ENCODE measurements at regions of chr2 and their contacts with region 1.

Region 1: GRCh38 chr2:231706731-231707624 is 1.3 kb upstream of the PTMA start:
- DNase-seq: peak; percentile 85

Region 2: DNA sequence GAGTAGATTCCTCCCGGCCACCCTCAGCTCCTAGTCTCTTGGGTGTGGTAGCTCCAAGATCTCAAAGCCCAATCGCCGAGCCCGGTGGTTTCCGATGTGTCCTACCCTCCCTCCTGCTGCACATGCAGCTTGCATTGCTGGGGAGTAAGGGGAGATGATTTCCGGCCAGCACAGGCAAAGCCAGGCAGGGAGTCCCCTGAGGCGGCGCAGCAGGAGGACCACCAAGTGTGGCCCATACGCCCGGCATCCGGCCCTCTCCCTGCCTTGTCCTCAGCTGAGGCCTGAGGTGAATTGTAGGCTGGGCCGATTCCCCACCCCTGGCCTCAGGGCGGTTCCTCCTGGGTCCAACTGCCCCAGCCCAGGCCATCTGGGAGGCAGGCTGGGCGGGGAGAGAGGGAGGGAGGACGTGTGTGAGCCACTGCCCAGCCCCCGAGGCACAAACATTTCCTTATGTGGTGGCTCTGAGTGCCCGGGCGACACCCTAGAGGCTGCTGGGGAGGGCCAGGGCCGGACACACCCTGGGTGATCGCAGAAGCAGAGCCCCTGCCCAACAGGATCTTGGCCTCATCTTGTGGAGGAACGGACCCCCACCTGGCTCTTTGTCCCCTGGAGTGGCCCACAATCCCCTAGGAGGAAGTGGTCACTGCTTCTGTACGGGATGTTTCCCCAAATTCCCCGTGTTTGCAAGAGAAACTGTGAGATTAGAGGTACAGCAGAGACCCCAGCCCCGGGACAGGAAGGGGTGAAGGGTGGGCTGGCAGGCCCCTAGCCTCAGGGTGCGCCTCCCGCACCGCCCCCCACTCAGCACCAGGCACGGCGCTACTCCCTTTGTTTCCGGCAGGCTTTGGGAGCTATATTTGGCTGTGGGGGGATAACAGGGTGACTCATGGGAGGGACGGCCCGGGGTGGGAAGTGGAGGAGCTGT is 40.5 kb before region 1 on chr2:
- CTCF ChIA-PET with region 1: interaction called, 3 read pairs
- POLR2A ChIA-PET with region 1: interaction called, 19 read pairs
- DNase-seq: peak; percentile 35

Region 3: DNA sequence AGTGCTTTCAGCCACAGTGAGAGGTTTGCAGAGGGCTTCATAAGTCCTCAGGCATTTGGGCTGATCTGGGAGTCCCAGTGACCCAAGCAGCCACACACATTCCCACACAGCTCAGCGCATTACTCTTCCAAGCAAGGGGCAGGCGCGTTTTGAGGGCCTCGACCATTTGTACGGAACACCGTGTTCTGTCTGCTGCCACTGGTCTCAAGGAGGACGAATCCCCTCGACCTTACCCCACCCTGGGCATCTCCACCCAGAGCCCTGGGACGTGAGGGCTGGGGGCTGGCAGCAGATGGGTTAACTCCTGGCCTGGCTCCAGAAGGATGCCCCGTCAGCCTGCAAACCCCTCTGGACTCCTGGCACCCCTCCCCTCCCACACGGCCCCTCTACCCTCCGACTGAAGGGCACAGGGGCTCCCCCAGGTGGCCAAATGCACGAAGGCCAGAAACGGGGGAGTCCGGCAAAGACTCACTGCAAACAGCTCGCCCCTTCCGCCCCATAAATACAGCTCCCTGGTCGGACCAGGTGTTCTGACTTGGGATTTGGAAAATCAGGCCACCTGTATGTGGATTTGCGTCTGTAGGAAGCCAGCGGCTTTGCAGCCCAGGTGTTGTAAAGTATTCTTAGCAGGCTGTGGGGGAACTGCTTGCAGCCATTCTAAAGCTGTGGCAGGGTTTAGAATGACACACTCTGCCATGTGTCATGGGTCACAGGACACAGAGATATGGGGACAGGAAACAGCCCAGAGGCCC is 32.2 kb before region 1 on chr2:
- CTCF ChIA-PET with region 1: interaction called, 6 read pairs
- POLR2A ChIA-PET with region 1: interaction called, 65 read pairs
- DNase-seq: peak; percentile 56

Region 4: GRCh38 chr2:231687133-231687852 is 19.7 kb before region 1 on chr2:
- CTCF ChIA-PET with region 1: interaction called, 6 read pairs
- POLR2A ChIA-PET with region 1: interaction called, 186 read pairs
- DNase-seq: peak; percentile 73

Region 5: DNA sequence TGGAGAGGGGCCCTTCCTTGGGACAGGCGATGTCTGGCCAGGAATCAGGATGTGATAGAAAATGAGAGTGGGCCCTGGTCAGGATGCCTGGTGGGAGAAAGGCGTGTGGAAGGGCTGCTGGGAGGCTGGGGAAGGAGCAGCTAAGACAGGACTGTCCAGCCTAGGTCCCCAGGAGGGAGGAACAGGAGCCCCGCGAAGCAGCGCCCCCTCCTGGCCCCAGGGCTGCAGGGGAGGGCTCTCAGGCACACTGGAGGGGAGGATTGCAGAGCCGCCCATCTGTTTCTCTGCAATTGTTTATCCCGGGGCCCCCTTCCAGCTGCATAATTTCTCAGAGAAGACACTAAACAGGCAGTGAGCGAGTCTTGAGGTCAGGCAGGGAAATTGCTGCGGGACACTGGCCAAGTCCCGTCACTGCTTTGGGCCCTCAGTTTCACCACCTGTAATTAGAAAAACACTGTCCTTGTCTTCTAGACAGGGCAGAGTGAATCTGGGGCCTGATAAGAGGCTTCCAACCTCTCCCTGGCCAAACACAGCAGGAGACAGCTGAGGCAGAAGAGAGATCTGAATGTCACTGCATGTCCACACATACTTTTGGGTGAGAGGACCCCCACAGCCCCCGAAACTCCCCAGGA is 223.1 kb after region 1 on chr2:
- CTCF ChIA-PET with region 1: no interaction called
- POLR2A ChIA-PET with region 1: no interaction called
- DNase-seq: peak; percentile 70

Region 6: DNA sequence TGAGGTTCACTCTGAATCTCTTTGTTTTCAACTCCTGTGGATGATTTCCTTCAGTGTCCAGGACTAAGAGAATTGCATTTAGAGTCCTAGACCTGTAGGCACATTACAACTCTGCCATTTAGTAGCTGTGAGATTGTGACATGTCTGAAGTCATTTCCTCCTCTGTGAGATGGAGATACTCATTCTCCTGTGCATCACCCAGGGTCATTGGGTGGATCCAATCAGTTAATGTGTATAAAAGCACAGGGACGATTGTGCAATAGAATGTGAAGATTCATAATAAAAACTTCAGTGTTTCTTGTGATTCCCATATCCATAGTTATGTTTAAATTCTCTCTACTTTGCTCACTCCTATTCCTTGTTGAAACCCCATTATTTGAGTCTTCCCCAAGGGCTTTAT is 368.1 kb after region 1 on chr2:
- CTCF ChIA-PET with region 1: no interaction called
- POLR2A ChIA-PET with region 1: no interaction called
- DNase-seq: no peak